H1 (cell line): ENCODE measurements at regions of chr9 and their contacts with region 1.

Region 1: GRCh38 chr9:81671880-81672280 is 17.5 kb downstream of the TLE1 start:
- DNase-seq: no peak
- H3K4me3 ChIP-seq: no peak overlapping the region
- H3K27ac ChIP-seq: no peak overlapping the region
- H3K4me1 ChIP-seq: peaks cover 1 to 11% (median 7%) of the 10 kb centered on the region in 4 experiments; a peak in 5 of 7 replicates
- H3K27me3 ChIP-seq: no peaks in the 10 kb centered on the region
- CTCF ChIP-seq: no peak
- EP300 ChIP-seq: no peak
- POLR2A ChIP-seq: no peak
- RAD21 ChIP-seq: no peak

Region 2: GRCh38 chr9:81653240-81653639 is 18.6 kb before region 1 on chr9:
- CTCF ChIA-PET with region 1: interaction called, 13 read pairs
- POLR2A ChIA-PET with region 1: interaction called, 5 read pairs
- DNase-seq: no peak
- H3K4me3 ChIP-seq: no peak overlapping the region
- H3K27ac ChIP-seq: no peak overlapping the region
- H3K4me1 ChIP-seq: peaks cover 4 to 13% (median 6%) of the 10 kb centered on the region in 4 experiments; a peak in 6 of 7 replicates
- H3K27me3 ChIP-seq: no peaks in the 10 kb centered on the region
- CTCF ChIP-seq: no peak
- EP300 ChIP-seq: no peak
- POLR2A ChIP-seq: no peak
- RAD21 ChIP-seq: no peak

Region 3: GRCh38 chr9:81689343-81690190 is 17.7 kb after region 1 on chr9 and contains the start of gene TLE1:
- CTCF ChIA-PET with region 1: interaction called, 5 read pairs
- POLR2A ChIA-PET with region 1: interaction called, 97 read pairs
- DNase-seq: peak; percentile 98 to 99
- H3K4me3 ChIP-seq: peak within 1 kb of the TSS; percentile 72 to 90 (median 86)
- H3K27ac ChIP-seq: peak within 1 kb of the TSS; percentile 80
- H3K4me1 ChIP-seq: peaks cover 6 to 22% (median 10%) of the 10 kb centered on the region in 4 experiments; a peak in 5 of 7 replicates
- H3K27me3 ChIP-seq: no peaks in the 10 kb centered on the region
- CTCF ChIP-seq: no peak; a peak in 1 of 4 replicates
- EP300 ChIP-seq: peak in 1 of 2 experiments; percentile 3; a peak in 1 of 3 replicates
- POLR2A ChIP-seq: peak; percentile 63 to 84; a peak in 2 of 3 replicates
- RAD21 ChIP-seq: no peak; a peak in 1 of 4 replicates
- total RNA-seq, gene TLE1: 91.0 and 91.6 TPM in 2 replicates